A549 (cell line): ENCODE measurements at regions of chr6 and their contacts with region 1.

Region 1: DNA sequence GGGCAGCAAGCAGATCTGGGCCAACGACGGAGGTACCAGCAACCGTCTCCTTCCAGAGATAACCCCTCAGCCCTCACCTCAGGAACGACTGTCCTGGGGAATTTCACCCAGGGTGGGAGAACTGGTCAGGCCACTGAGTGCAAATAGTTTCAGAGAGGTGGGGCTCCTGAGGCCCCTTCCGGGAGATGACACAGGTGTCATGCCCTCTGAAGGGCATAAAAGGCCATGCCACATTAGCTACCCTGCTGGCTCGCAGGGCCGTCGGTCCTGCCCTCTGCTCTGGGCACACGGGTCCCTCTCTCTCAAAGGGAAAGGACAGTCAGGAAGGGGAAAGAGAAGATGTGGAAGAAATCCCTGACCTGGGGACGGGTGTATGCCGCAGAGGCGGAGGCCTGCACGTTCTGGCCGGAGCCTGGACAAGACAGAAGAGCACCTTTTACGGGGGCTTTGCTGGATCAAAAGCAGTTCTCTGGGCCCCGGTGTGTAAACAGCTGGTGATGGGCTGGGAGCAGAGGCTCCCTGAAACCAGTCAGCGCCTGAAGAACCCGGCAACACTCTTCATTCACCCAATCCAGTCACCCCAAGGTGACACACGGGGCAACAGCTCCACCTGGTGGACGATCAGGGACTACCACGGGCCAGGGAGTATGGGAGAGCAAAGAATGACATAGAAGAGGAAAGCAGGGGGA is 6.4 kb upstream of the TAF8 start:
- DNase-seq: peak; percentile 81 to 82
- ATAC-seq: peak; percentile 87 to 92
- H3K4me3 ChIP-seq: no peak overlapping the region
- H3K27ac ChIP-seq: peak overlapping the region; percentile 88 to 96
- H3K4me1 ChIP-seq: peaks cover 66% of the 10 kb centered on the region
- CTCF ChIP-seq: peak; percentile 88
- EP300 ChIP-seq: no peak
- POLR2A ChIP-seq: no peak
- RAD21 ChIP-seq: peak; percentile 98

Region 2: DNA sequence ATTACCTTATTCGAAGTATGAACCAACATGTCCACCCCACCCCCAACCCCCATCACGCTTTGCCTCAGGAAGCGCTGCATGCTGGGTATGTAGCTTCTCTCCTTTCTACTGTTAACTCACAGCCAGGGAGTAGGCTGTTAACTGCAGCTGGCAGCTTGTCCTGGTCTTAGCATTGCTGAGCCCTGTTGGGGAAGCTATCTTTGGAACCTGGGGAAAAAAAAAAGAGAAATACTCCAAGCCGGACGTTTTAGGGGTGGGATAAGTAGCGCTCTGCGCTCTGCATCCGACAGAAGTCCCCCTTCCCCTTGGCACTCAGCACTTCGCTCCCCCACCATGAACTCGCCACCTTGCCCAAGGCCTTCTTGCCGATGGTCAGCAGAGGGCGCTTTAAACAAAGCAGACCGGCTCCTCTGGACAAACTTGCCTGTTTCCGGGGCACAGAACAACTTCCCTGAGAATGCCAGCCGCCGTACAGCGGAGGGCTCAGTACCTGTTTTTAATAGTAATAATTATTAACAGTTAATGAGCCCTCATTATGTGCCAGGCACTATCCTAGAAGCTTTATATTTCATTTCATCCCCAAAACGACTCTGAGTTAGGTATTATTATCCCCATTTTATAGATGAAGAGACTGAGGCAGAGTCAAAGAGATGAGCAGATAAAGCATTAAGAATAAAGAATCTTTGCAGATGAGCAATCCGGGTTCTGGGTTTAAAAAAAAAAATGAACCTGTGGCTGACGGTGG is 440.9 kb before region 1 on chr6:
- CTCF ChIA-PET with region 1: no interaction called
- POLR2A ChIA-PET with region 1: no interaction called
- DNase-seq: peak; percentile 68 to 80
- ATAC-seq: peak; percentile 83 to 87
- H3K4me3 ChIP-seq: peak overlapping the region; percentile 23; the same call in 1 of the 3 replicates
- H3K27ac ChIP-seq: peak overlapping the region; percentile 59 to 80; a peak in 5 of 6 replicates
- H3K4me1 ChIP-seq: peaks cover 4% of the 10 kb centered on the region; the same call in 1 of the 3 replicates
- CTCF ChIP-seq: peak; percentile 79
- EP300 ChIP-seq: no peak
- POLR2A ChIP-seq: no peak
- RAD21 ChIP-seq: peak; percentile 82 to 83

Region 3: DNA sequence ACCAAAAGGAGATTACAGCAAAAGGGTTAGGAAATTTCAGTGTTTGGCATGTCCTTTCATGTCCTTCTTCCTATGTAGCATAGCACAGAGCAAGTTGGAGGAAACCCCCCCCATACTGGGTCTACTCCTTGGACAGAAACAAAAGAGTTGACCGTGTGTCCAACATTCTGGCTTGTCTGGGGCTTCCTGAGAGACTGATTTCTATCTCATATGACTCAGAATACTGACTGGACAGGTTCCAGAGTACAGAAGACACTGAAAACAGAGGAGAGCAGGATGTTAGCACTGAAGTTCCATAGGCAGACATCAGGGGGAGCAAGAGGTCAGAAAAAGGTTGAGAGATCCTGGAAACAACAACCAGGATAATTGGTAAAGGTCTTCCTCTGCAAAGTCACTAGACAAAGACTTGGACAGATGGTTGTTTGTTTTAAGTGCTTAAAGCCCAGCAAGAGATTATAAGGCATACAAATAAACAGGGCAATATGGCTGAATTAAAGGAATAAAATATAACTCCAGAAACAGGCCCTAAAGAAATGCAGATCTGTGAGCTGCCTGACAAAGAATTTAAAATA is 197.2 kb before region 1 on chr6:
- CTCF ChIA-PET with region 1: interaction called, 23 read pairs
- POLR2A ChIA-PET with region 1: no interaction called
- DNase-seq: peak; percentile 55 to 79
- ATAC-seq: peak; percentile 96 to 98
- H3K4me3 ChIP-seq: no peak overlapping the region
- H3K27ac ChIP-seq: peak overlapping the region; percentile 71 to 87
- H3K4me1 ChIP-seq: peaks cover 15% of the 10 kb centered on the region
- CTCF ChIP-seq: peak; percentile 60
- EP300 ChIP-seq: no peak
- POLR2A ChIP-seq: no peak
- RAD21 ChIP-seq: peak; percentile 72 to 84

Region 4: GRCh38 chr6:41920921-41921711 is 122.8 kb before region 1 on chr6 and contains the starts of genes BYSL and MED20:
- CTCF ChIA-PET with region 1: interaction called, 10 read pairs
- POLR2A ChIA-PET with region 1: no interaction called
- DNase-seq: peak; percentile 86 to 97
- ATAC-seq: peak; percentile 88 to 94
- H3K4me3 ChIP-seq: peak within 1 kb of the TSS; percentile 80
- H3K27ac ChIP-seq: peak within 1 kb of the TSS; percentile 99
- H3K4me1 ChIP-seq: peaks cover 49% of the 10 kb centered on the region
- CTCF ChIP-seq: peak; percentile 81
- EP300 ChIP-seq: no peak
- POLR2A ChIP-seq: no peak; the same call in 1 of the 2 replicates
- RAD21 ChIP-seq: no peak
- polyA plus RNA-seq, gene BYSL: 28.8 and 38.7 TPM in 2 replicates
- polyA plus RNA-seq, gene MED20: 29.3 and 32.9 TPM in 2 replicates

Region 5: DNA sequence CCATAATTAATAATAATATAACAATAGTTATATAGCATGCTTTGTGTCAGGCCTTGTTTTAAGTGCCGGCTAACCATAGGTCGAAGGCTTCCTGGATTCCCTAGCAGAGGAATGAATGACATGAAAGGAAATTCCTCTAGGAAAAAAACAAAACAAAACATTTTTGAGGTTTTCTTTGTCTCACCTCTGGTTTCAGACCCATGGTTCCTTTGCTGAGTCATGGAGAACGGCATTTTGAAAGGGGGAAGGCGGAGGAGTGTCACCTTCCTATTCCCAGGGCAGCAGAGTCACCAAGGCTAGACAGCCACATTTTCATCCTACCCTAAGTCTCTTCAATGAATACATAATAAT is 77.0 kb before region 1 on chr6:
- CTCF ChIA-PET with region 1: interaction called, 20 read pairs
- POLR2A ChIA-PET with region 1: interaction called, 4 read pairs
- DNase-seq: peak; percentile 50 to 84
- ATAC-seq: peak; percentile 65 to 70
- H3K4me3 ChIP-seq: peak overlapping the region; percentile 31; the same call in 2 of the 3 replicates
- H3K27ac ChIP-seq: peak overlapping the region; percentile 95 to 97
- H3K4me1 ChIP-seq: peaks cover 80% of the 10 kb centered on the region
- CTCF ChIP-seq: no peak
- EP300 ChIP-seq: no peak
- POLR2A ChIP-seq: no peak
- RAD21 ChIP-seq: no peak

Region 6: DNA sequence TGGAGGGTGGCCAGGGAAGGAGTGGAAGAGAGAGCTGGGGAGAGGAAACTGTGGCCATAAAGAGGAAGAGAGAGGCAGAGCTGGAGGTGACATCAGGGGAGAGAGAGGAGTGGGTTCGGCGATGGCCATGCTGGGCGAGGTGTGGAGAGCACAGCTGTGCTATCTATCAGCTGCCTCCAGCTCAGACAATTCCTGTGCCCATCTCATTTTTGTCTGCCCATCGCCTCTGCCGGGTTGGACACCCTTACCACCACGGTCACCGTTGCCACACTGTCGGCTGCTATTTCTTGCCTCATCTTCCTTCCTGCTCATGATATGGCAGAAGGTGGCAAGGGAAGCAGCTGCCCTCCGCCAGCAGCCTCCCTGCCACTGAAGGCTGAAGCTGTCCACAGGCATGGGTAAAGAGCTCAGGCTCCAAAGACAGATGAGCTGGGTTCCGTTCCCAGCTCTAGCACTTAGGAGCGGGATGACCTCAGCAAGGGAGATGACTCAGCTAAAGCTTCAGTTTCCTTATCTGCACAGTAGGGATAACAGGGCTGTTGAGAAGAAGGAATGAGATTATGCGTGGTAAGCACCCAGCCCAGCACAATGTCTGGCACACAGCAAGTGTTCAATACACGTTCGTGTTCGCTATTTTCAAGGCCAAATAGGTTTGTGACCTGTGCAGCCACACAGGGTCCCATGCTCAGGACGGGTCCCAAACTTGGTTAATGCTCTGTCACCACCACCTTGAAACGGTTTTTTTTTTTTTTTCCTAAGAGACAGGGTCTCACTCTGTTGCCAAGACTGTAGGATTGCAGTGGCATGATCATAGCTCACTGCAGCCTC is 15.5 kb before region 1 on chr6:
- CTCF ChIA-PET with region 1: interaction called, 25 read pairs
- POLR2A ChIA-PET with region 1: no interaction called
- DNase-seq: peak; percentile 62 to 72
- ATAC-seq: peak; percentile 76 to 88
- H3K4me3 ChIP-seq: no peak overlapping the region
- H3K27ac ChIP-seq: peak overlapping the region; percentile 89 to 90
- H3K4me1 ChIP-seq: peaks cover 31% of the 10 kb centered on the region
- CTCF ChIP-seq: no peak
- EP300 ChIP-seq: no peak
- POLR2A ChIP-seq: no peak
- RAD21 ChIP-seq: no peak